Calu3 (cell line): ENCODE measurements at regions of chr17 and their contacts with region 1.

Region 1: GRCh38 chr17:39963829-39964228 is 1.0 kb downstream of the GSDMA start:
- DNase-seq: peak; percentile 94
- H3K4me3 Mint-ChIP-seq: no peak overlapping the region
- H3K27ac Mint-ChIP-seq: peak overlapping the region; percentile 0
- H3K4me1 Mint-ChIP-seq: peaks cover 45% of the 10 kb centered on the region
- H3K27me3 Mint-ChIP-seq: peaks cover 32% of the 10 kb centered on the region
- CTCF ChIP-seq: no peak

Region 2: GRCh38 chr17:39676198-39676819 is 287.5 kb before region 1 on chr17:
- CTCF ChIA-PET with region 1: interaction called, 8,195 read pairs
- intact Hi-C with region 1: loop called (anchors 1 kb)
- DNase-seq: peak; percentile 100
- H3K4me3 Mint-ChIP-seq: peak overlapping the region; percentile 3
- H3K27ac Mint-ChIP-seq: peak overlapping the region; percentile 62
- H3K4me1 Mint-ChIP-seq: peaks cover 91% of the 10 kb centered on the region
- H3K27me3 Mint-ChIP-seq: peaks cover 6% of the 10 kb centered on the region
- CTCF ChIP-seq: no peak

Region 3: GRCh38 chr17:39852239-39852638 is 111.6 kb before region 1 on chr17:
- CTCF ChIA-PET with region 1: interaction called, 1,809 read pairs
- intact Hi-C with region 1: no loop called
- DNase-seq: peak; percentile 59
- H3K4me3 Mint-ChIP-seq: no peak overlapping the region
- H3K27ac Mint-ChIP-seq: no peak overlapping the region
- H3K4me1 Mint-ChIP-seq: peaks cover 10% of the 10 kb centered on the region
- H3K27me3 Mint-ChIP-seq: no peaks in the 10 kb centered on the region
- CTCF ChIP-seq: no peak

Region 4: DNA sequence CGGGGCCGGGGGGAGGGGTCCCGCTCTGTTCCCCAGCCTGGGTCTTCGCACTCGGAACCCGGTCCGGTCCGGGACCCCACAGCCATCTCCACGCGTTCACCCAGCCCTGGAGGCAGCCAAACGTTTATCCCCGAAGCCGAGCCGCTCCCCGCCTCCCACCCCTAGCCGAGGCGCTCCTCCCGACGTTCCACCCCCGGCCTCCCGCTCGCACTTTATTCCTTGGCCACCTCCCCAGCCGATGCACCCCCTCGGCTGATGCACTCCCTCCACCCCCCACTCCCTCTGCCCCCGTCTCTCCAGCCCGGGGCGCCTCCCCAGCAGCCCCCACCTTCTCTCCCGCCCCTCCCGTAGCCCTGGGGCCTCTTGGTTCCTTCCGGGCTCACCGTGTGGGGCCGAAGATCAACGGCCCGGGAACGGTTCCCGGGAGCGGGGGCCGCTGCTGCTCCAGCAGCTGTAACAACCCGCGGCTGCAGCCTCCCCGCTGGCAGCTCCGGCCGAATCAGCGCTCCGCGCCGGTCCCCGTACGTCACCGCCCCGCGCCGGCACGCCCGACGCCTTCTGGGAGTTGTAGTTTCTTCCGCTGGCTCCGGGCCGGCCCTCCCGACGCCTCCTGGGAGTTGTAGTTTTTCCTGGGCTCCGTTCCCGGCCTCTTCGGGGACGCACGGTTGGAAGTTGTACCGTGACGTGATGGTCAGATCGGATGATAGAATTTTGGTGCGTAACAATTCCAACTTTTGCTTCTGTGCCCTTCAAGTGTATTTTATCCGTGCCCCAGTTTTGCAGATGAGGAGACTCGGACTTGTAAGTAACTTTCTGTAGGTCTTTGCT is 36.5 kb before region 1 on chr17 and contains the starts of genes LRRC3C and ORMDL3:
- CTCF ChIA-PET with region 1: interaction called, 6,506 read pairs
- intact Hi-C with region 1: loop called (anchors 1 kb)
- DNase-seq: no peak
- H3K4me3 Mint-ChIP-seq: peak within 1 kb of the TSS; percentile 74
- H3K27ac Mint-ChIP-seq: peak within 1 kb of the TSS; percentile 66
- H3K4me1 Mint-ChIP-seq: peaks cover 60% of the 10 kb centered on the region
- H3K27me3 Mint-ChIP-seq: no peaks in the 10 kb centered on the region
- CTCF ChIP-seq: no peak
- total RNA-seq, gene LRRC3C: not detected in 2 replicates
- total RNA-seq, gene ORMDL3: 1,738 and 1,968 TPM in 2 replicates

Region 5: DNA sequence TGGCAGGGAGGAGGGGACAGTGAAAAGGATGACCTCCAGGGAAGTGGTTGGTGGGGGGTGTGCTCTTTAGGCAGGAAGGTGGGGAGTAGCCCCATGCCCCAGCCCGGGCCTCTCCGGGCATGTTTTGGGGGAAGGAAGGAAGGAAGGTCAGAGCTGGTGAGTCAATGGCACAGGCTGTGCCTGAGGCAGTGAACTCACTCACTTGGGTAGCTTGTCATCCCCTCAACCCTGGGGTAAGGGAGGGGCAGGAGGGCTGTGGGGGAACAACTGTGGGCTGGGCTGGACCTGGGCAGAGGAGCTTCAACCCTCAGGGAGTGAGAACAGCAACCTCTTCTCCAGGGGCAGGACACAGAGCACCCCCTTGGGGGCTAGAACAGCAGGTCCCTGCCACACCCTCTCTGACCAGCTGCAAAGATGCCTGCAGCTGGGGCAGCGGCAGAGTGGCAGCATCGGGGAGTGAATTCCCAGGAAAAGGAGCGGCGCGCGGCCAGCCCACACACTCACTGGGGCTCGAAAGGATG is 57.7 kb after region 1 on chr17:
- CTCF ChIA-PET with region 1: interaction called, 1,657 read pairs
- intact Hi-C with region 1: no loop called
- DNase-seq: peak; percentile 88
- H3K4me3 Mint-ChIP-seq: no peak overlapping the region
- H3K27ac Mint-ChIP-seq: no peak overlapping the region
- H3K4me1 Mint-ChIP-seq: peaks cover 36% of the 10 kb centered on the region
- H3K27me3 Mint-ChIP-seq: peaks cover 23% of the 10 kb centered on the region
- CTCF ChIP-seq: no peak

Region 6: GRCh38 chr17:40150276-40150675 is 186.4 kb after region 1 on chr17:
- CTCF ChIA-PET with region 1: no interaction called
- intact Hi-C with region 1: no loop called
- DNase-seq: no peak
- H3K4me3 Mint-ChIP-seq: no peak overlapping the region
- H3K27ac Mint-ChIP-seq: no peak overlapping the region
- H3K4me1 Mint-ChIP-seq: peaks cover 5% of the 10 kb centered on the region
- H3K27me3 Mint-ChIP-seq: no peaks in the 10 kb centered on the region
- CTCF ChIP-seq: no peak